Prostate gland (tissue), 2 donors: ENCODE measurements at regions of chr1 and their contacts with region 1.

Region 1: GRCh38 chr1:63828322-63829044 is 54.7 kb downstream of the ROR1 start:
- DNase-seq: no peak
- H3K4me3 ChIP-seq: no peak overlapping the region
- H3K27ac ChIP-seq: no peak overlapping the region
- H3K4me1 ChIP-seq: peaks cover 2% of the 10 kb centered on the region
- H3K27me3 ChIP-seq: no peaks in the 10 kb centered on the region
- CTCF ChIP-seq: no peak
- POLR2A ChIP-seq: no peak

Region 2: DNA sequence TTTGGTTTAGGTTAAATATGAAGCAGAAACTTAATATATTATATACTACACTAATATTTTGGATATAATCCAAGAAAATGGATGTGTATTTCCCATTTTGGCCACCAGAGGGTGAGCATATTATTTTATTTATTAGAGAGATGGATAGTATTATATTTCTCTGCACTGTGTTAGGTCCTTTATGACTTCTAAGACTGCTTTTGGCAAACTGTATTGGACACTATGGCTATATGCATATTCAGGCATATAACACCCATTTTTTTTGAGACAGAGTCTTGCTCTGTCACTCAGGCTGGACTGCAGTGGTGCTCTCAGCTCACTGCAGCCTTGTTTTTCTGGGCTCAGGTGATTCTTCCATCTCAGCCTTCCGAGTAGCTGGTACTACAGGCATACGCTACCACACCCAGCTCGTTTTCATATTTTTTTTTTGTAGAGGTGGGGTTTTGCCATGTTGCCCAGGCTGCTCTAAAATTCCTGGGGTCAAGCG is 253.1 kb before region 1 on chr1:
- intact Hi-C with region 1: no loop called
- DNase-seq: no peak
- H3K4me3 ChIP-seq: no peak overlapping the region
- H3K27ac ChIP-seq: no peak overlapping the region
- H3K4me1 ChIP-seq: no peaks in the 10 kb centered on the region
- H3K27me3 ChIP-seq: no peaks in the 10 kb centered on the region
- CTCF ChIP-seq: peak; percentile 65 to 83 (median 66)
- POLR2A ChIP-seq: no peak

Region 3: GRCh38 chr1:63868268-63868781 is 39.8 kb after region 1 on chr1:
- intact Hi-C with region 1: loop called (anchors 5 kb)
- DNase-seq: no peak
- H3K4me3 ChIP-seq: no peak overlapping the region
- H3K27ac ChIP-seq: peak overlapping the region in 1 of 2 donors; percentile 2
- H3K4me1 ChIP-seq: no peaks in the 10 kb centered on the region
- H3K27me3 ChIP-seq: no peaks in the 10 kb centered on the region
- CTCF ChIP-seq: no peak
- POLR2A ChIP-seq: no peak